ENCODE measurements at regions of chr16 and their contacts with region 1.

Region 1: GRCh38 chr16:23999663-24000062 is 163.9 kb downstream of the PRKCB start:
- DNase-seq: no peak
- ATAC-seq: no peak
- H3K4me3 ChIP-seq: no peak overlapping the region
- H3K27ac ChIP-seq: no peak overlapping the region
- H3K4me1 ChIP-seq: no peaks in the 10 kb centered on the region
- H3K27me3 ChIP-seq: peaks cover 0 to 11% (median 0%) of the 10 kb centered on the region in 4 donors
- CTCF ChIP-seq: no peak

Region 2: DNA sequence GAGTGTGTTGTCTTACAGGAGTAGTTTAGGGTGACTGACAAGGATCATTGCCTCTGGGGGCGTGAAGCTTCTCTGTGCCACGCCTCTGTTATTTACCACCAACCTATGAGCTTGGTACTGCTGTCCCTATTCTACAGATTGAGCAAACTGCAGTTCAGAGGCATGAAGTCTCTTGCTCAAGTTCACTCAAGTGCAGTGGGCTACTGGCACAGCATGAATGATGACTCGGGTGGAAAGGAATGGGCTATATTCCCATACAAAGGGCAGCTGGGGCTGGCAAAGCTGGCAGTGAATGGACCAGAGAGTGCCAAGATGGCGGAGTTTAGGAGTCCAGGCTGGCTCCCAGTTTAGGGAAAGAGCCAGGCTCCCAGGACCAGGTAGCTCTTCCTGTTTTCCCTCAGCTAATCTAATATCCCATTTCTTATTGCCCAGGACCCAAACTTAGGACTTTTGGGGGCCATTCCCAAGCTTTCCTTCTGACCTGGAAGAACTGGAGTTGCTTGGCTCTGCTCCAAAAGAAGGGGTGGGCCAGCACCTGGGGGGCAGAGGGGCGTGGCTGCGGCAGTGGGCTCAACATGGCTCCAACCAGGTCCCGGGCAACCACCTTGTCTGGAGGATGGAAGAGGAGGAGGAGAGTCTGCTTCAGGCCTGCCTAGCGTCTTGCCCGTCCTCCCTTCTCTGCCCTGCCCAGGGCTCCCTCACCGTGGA is 308.0 kb before region 1 on chr16:
- intact Hi-C with region 1: no loop called
- DNase-seq: no peak
- ATAC-seq: no peak
- H3K4me3 ChIP-seq: no peak overlapping the region
- H3K27ac ChIP-seq: no peak overlapping the region
- H3K4me1 ChIP-seq: no peaks in the 10 kb centered on the region
- H3K27me3 ChIP-seq: no peaks in the 10 kb centered on the region
- CTCF ChIP-seq: no peak

Region 3: GRCh38 chr16:23803591-23804123 is 196.0 kb before region 1 on chr16:
- intact Hi-C with region 1: loop called in 1 of 3 experiments (anchors 10 kb)
- DNase-seq: peak in 3 of 6 donors; percentile 11 to 53 (median 35)
- ATAC-seq: peak in 3 of 4 donors; percentile 52 to 74 (median 63)
- H3K4me3 ChIP-seq: no peak overlapping the region
- H3K27ac ChIP-seq: no peak overlapping the region
- H3K4me1 ChIP-seq: no peaks in the 10 kb centered on the region
- H3K27me3 ChIP-seq: peaks cover 0 to 4% (median 0%) of the 10 kb centered on the region in 4 donors
- CTCF ChIP-seq: peak in 1 of 4 donors; percentile 8

Region 4: DNA sequence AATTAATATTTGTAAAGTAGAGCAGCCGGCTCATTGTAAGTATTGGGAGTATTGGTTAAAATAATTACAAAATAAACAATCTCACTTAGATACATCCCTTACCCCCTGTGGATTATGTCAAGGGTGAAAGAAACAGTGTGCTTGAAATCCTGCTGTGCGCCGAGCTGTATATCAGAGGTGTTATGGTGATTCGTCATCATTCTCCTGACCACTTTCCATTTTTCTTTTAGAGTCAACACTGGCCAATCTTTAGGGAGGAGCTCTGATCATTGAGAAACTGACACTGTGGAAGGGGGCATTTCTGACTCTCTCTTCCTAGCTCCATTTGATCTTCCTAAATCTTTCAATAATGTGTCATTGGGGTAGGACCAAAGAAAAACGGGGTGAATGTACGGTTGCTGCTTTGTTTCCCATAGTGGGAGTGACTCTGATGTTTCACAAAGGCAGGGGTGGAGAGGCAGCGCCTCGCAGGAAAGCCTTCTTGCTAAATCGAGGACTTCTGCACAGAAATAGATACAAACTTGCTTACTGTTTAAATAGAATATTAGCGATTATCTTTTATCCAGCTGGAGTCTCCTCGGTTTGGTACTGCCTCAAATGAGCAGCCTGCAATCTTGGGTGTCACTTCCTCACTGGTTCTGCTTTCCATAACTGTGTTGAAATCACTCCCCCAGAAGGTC is 40.5 kb before region 1 on chr16:
- intact Hi-C with region 1: no loop called
- DNase-seq: no peak
- ATAC-seq: peak in 2 of 4 donors; percentile 32 to 48
- H3K4me3 ChIP-seq: no peak overlapping the region
- H3K27ac ChIP-seq: no peak overlapping the region
- H3K4me1 ChIP-seq: no peaks in the 10 kb centered on the region
- H3K27me3 ChIP-seq: no peaks in the 10 kb centered on the region
- CTCF ChIP-seq: no peak

Measured in pancreas (tissue), 10 donors.